ENCODE measurements at regions of chr16 and their contacts with region 1.

Region 1: GRCh38 chr16:66934153-66934838 is at the start of gene CIAO2B:
- DNase-seq: peak; percentile 77
- ATAC-seq: peak; percentile 69
- H3K4me3 ChIP-seq: peak within 1 kb of the TSS; percentile 81 to 89 (median 88)
- H3K27ac ChIP-seq: peak within 1 kb of the TSS; percentile 81
- H3K4me1 ChIP-seq: peaks cover 65% of the 10 kb centered on the region
- H3K27me3 ChIP-seq: no peaks in the 10 kb centered on the region; a peak in 1 of 5 replicates
- CTCF ChIP-seq: no peak; the same call in none of the 2 replicates
- EP300 ChIP-seq: peak; percentile 22 to 61; a peak in 2 of 4 replicates
- POLR2A ChIP-seq: peak; percentile 85 to 93
- RAD21 ChIP-seq: 0 out of 2 replicates have a peak, but pooled peaks have one; percentile 31
- total RNA-seq, gene CIAO2B: 157 and 174 TPM in 2 replicates

Region 2: GRCh38 chr16:66894948-66895688 is 39.2 kb before region 1 on chr16:
- CTCF ChIA-PET with region 1: interaction called, 28 read pairs
- POLR2A ChIA-PET with region 1: interaction called, 10 read pairs
- in situ Hi-C with region 1: loop called (anchors 5 kb)
- intact Hi-C with region 1: no loop called
- DNase-seq: peak; percentile 80
- ATAC-seq: peak; percentile 90
- H3K4me3 ChIP-seq: no peak overlapping the region; a peak in 1 of 6 replicates
- H3K27ac ChIP-seq: no peak overlapping the region
- H3K4me1 ChIP-seq: peaks cover 63% of the 10 kb centered on the region
- H3K27me3 ChIP-seq: peaks cover 0 to 2% of the 10 kb centered on the region in 2 experiments; a peak in 1 of 5 replicates
- CTCF ChIP-seq: peak; percentile 100
- EP300 ChIP-seq: no peak
- POLR2A ChIP-seq: no peak
- RAD21 ChIP-seq: peak; percentile 99

Region 3: DNA sequence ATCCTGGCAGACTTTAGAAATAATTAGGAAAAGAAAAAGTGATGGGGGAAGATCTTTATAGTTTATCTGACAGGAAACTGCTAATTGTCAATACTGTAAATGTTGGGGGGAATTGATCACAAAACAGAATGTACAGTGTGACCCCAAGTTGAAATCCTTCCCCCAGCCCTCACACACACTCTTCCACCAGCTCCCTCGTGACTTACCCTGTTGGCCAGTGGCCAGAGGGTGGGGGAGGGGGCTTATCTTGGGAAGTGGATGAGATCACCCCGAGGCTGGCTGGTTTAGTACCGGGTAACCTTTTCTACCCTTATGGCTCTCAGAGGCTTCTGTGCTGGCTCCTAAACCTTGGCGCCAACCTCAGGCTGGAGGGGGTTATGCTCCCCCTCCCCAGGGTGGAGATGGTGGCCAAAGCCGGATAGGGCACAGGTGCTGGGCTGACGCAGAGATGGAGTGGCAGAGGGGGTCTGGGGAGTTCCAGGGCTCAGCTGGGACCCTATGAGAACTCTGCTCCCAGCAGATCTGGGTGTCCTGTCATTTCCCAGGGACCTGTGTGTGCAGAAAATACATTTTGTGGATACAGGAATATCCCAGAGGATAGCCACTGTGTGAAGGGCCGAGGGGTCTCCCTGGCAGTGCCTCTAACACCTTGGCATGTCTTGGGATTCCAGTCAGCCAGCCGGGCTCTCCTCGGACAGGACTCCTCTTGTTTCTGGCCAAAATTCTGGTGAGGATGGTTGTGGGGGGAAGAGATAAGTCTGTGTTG is 34.2 kb before region 1 on chr16:
- CTCF ChIA-PET with region 1: interaction called, 28 read pairs
- POLR2A ChIA-PET with region 1: interaction called, 20 read pairs
- in situ Hi-C with region 1: loop called (anchors 5 kb)
- intact Hi-C with region 1: no loop called
- DNase-seq: peak; percentile 72
- ATAC-seq: peak; percentile 3; the same call in 2 of the 3 replicates
- H3K4me3 ChIP-seq: peak overlapping the region; percentile 20 to 58 (median 24); a peak in 5 of 6 replicates
- H3K27ac ChIP-seq: no peak overlapping the region
- H3K4me1 ChIP-seq: peaks cover 90% of the 10 kb centered on the region
- H3K27me3 ChIP-seq: peaks cover 0 to 2% of the 10 kb centered on the region in 2 experiments; a peak in 1 of 5 replicates
- CTCF ChIP-seq: no peak
- EP300 ChIP-seq: peak in 1 of 2 experiments; percentile 32; a peak in 1 of 4 replicates
- POLR2A ChIP-seq: no peak
- RAD21 ChIP-seq: no peak

Region 4: GRCh38 chr16:66905633-66906539 is 28.4 kb before region 1 on chr16:
- CTCF ChIA-PET with region 1: no interaction called
- POLR2A ChIA-PET with region 1: interaction called, 20 read pairs
- in situ Hi-C with region 1: loop called (anchors 5 kb)
- intact Hi-C with region 1: no loop called
- DNase-seq: peak; percentile 99
- ATAC-seq: peak; percentile 73
- H3K4me3 ChIP-seq: peak overlapping the region; percentile 52 to 72 (median 56)
- H3K27ac ChIP-seq: peak overlapping the region; percentile 75
- H3K4me1 ChIP-seq: peaks cover 84% of the 10 kb centered on the region
- H3K27me3 ChIP-seq: no peaks in the 10 kb centered on the region
- CTCF ChIP-seq: 0 out of 2 replicates have a peak, but pooled peaks have one; percentile 8
- EP300 ChIP-seq: peak in 1 of 2 experiments; percentile 75; a peak in 2 of 4 replicates
- POLR2A ChIP-seq: peak; percentile 54 to 66
- RAD21 ChIP-seq: no peak

Region 5: GRCh38 chr16:66918803-66919568 is 15.3 kb before region 1 on chr16 and contains the start of gene CDH16:
- CTCF ChIA-PET with region 1: no interaction called
- POLR2A ChIA-PET with region 1: interaction called, 11 read pairs
- in situ Hi-C with region 1: no loop called
- intact Hi-C with region 1: no loop called
- DNase-seq: no peak
- ATAC-seq: peak; percentile 63
- H3K4me3 ChIP-seq: peak within 1 kb of the TSS in 2 of 3 experiments; percentile 24 to 48; a peak in 1 of 6 replicates
- H3K27ac ChIP-seq: no peak within 1 kb of the TSS
- H3K4me1 ChIP-seq: peaks cover 34% of the 10 kb centered on the region
- H3K27me3 ChIP-seq: peaks cover 0 to 4% of the 10 kb centered on the region in 2 experiments; a peak in 3 of 5 replicates
- CTCF ChIP-seq: 0 out of 2 replicates have a peak, but pooled peaks have one; percentile 8
- EP300 ChIP-seq: no peak
- POLR2A ChIP-seq: no peak
- RAD21 ChIP-seq: no peak
- total RNA-seq, gene CDH16: 3.2 and 3.9 TPM in 2 replicates

Region 6: DNA sequence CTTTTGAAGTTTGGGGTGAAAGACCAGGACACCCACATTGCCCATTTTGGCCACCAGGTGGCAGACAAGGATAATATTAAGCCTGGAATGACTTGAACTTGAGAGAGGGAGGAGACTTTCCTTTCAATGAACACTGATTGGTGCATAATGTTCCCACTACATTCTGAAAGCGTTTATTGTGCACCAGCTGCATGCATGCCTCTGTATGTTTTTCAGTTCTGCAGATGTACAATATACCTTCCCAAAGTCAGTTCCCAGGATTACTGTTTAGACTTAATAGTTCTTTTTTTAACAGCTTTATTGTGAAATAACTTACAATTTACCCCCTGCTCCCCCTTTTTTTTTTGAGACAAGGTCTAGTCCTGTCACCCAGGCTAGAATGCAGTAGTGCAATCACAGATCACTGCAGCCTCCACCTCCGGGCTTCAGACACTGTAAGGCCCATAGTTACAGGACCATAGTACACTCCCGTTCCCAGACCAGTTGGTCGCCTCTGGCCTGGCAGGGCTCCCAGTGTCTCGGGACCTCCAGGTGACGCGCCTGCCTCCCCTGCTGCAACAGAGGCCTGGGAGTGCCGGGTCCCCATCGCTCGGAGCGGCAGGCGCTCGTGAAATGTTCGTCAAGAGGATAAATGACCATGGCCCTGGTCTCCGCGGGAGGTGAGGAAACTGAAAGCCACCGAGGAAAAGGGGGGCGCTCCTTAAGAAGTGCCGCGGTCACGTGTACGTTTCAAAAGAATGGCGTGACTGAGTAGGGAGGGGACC is 13.2 kb after region 1 on chr16:
- CTCF ChIA-PET with region 1: no interaction called
- POLR2A ChIA-PET with region 1: interaction called, 3 read pairs
- in situ Hi-C with region 1: no loop called
- intact Hi-C with region 1: loop called (anchors 1 kb)
- DNase-seq: peak; percentile 89
- ATAC-seq: peak; percentile 78
- H3K4me3 ChIP-seq: peak overlapping the region; percentile 35 to 64 (median 37); a peak in 5 of 6 replicates
- H3K27ac ChIP-seq: no peak overlapping the region
- H3K4me1 ChIP-seq: peaks cover 34% of the 10 kb centered on the region
- H3K27me3 ChIP-seq: peaks cover 4 to 24% of the 10 kb centered on the region in 2 experiments; a peak in 4 of 5 replicates
- CTCF ChIP-seq: peak; percentile 92
- EP300 ChIP-seq: no peak
- POLR2A ChIP-seq: peak in 1 of 2 experiments; percentile 49; a peak in 1 of 4 replicates
- RAD21 ChIP-seq: peak; percentile 76

Region 7: DNA sequence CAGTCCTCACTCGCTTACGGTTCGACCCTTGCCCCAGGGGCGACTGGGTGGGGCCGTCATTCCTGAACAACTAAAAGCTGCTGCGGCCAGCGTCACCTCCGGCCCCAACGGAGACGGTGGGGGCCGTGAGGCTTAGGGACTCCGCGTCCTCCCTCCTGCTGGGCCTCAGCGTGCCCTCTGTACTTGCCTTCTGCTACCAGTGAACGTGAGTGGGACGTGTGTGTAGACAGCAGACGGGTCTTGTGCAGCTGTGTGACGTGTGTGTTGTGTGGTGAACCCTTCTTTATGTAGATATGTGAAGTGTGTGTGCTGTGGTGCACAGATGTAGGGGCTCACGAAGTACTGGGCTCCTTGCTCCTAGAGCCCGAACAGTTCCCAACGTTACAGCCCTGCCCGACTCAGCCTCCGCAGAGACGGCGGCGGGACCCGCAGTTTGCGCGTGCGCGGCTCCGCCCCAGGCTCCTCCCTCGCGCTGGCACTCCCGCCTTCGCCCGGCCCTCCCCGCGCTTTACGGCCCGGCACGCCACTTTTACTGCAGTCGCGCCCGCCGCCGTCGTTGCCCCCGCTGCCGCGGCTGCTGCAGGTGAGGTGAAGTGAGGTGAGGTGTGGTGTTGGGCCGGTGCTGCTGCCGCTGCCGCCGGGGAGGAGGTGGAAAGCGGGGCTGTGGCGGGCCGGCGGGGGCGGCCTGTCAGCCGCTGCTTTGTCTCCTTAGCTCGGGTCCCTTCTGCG is 175.3 kb after region 1 on chr16 and contains the start of gene PHAF1:
- CTCF ChIA-PET with region 1: no interaction called
- POLR2A ChIA-PET with region 1: interaction called, 6 read pairs
- in situ Hi-C with region 1: no loop called
- intact Hi-C with region 1: loop called (anchors 1 kb)
- DNase-seq: peak; percentile 86
- ATAC-seq: peak; percentile 79
- H3K4me3 ChIP-seq: peak within 1 kb of the TSS; percentile 81 to 99 (median 83)
- H3K27ac ChIP-seq: peak within 1 kb of the TSS; percentile 90
- H3K4me1 ChIP-seq: peaks cover 48% of the 10 kb centered on the region
- H3K27me3 ChIP-seq: no peaks in the 10 kb centered on the region; a peak in 1 of 5 replicates
- CTCF ChIP-seq: peak; percentile 31; the same call in 1 of the 2 replicates
- EP300 ChIP-seq: peak in 1 of 2 experiments; percentile 17; a peak in 2 of 4 replicates
- POLR2A ChIP-seq: peak; percentile 98 to 99
- RAD21 ChIP-seq: peak; percentile 38
- total RNA-seq, gene PHAF1: 48.3 and 53.6 TPM in 2 replicates

Measured in HepG2 (cell line).